ENCODE measurements at regions of chr9 and their contacts with region 1.

Region 1: DNA sequence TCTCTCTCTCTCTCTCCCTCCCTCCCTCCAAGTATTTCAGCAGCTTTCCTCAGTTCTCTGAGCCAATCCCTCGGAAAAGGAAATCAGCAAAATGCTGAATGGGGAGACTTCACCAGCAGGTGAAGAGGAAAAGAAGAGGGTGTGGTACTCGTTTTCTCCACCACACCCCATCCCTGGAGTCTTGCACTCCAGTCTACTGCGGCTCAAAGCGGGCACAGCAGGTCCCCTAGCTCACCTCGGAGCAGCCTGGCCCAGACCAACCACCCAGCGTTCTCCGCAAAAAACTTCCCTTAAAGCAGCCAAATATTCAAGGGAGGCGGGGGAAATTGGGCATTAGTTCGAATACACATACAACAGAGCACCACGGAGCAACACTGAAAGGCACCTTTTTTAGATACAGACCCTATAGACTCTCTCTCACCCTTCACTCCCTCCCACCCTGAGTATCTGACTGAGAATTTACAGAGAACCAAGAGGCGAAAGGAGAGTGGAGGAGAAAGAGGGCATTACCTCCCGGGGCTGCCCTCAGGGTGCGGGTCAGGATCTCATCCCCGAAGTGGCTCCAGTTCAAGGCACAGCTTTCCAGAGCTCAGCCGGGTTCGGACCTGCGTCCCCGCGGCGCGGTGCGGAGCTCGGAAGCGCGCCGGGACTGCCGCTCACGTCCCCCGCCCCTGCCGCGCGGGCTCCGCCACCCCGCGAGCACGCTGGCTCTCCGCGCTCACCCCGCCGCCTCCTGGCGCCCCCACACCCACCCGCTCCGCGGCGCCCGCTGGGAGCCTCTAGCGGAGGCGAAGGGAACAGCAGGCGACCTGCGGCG is 1638.5 kb upstream of the C9orf72 start:
- DNase-seq: peak in 2 of 5 donors; percentile 37 to 56
- H3K4me3 ChIP-seq: peak overlapping the region; percentile 49
- H3K27ac ChIP-seq: no peak overlapping the region
- H3K4me1 ChIP-seq: peaks cover 2% of the 10 kb centered on the region
- H3K27me3 ChIP-seq: no peaks in the 10 kb centered on the region
- CTCF ChIP-seq: peak in 1 of 3 donors; percentile 39
- EP300 ChIP-seq: no peak
- POLR2A ChIP-seq: no peak

Region 2: GRCh38 chr9:27586304-27586703 is 1625.5 kb before region 1 on chr9:
- intact Hi-C with region 1: loop called in 1 of 4 experiments (anchors 10 kb)
- DNase-seq: no peak
- H3K4me3 ChIP-seq: no peak overlapping the region
- H3K27ac ChIP-seq: no peak overlapping the region
- H3K4me1 ChIP-seq: no peaks in the 10 kb centered on the region
- H3K27me3 ChIP-seq: no peaks in the 10 kb centered on the region
- CTCF ChIP-seq: no peak
- EP300 ChIP-seq: no peak
- POLR2A ChIP-seq: no peak

Region 3: GRCh38 chr9:29044958-29045357 is 166.8 kb before region 1 on chr9:
- intact Hi-C with region 1: no loop called
- DNase-seq: no peak
- H3K4me3 ChIP-seq: no peak overlapping the region
- H3K27ac ChIP-seq: no peak overlapping the region
- H3K4me1 ChIP-seq: no peaks in the 10 kb centered on the region
- H3K27me3 ChIP-seq: no peaks in the 10 kb centered on the region
- CTCF ChIP-seq: no peak
- EP300 ChIP-seq: no peak
- POLR2A ChIP-seq: no peak

Region 4: DNA sequence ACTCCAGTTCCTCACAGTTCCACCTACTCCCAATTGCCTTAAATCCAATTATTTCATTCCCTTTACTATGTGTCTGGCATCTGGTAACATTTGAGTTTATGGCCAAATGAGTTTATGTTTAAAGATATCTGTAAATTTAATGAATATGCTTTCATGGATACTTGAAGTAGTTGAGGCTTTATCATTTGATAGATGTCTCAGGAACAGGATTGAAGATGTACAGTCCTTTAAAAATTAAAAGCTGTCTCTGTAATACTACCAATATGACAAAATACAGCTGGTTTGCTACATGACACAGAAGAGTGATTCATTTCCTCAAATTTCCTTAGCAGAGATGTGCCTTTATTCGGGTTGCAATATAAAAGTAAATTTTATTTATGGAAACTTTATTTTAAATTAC is 846.7 kb after region 1 on chr9:
- intact Hi-C with region 1: no loop called
- DNase-seq: no peak
- H3K4me3 ChIP-seq: no peak overlapping the region
- H3K27ac ChIP-seq: no peak overlapping the region
- H3K4me1 ChIP-seq: no peaks in the 10 kb centered on the region
- H3K27me3 ChIP-seq: no peaks in the 10 kb centered on the region
- CTCF ChIP-seq: no peak
- EP300 ChIP-seq: no peak
- POLR2A ChIP-seq: no peak

Region 5: DNA sequence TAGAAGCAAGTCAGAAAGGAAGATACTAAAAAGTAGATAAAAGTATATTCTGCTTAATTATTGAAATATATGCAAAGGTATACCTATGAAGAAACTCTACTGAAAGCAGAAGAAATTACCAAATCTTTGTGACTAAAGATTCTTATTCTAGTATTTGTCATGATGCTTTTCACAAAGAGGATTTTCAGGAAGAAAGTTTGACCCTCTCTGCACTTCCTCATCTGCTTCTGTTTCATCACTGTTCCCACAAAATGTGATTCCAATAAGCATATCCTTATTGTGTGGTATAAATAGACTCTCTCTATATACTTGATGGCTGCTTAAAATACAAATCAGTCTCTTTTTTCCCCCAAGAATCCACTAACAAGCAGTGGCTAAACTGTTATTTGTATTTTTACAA is 1033.1 kb after region 1 on chr9:
- intact Hi-C with region 1: no loop called
- DNase-seq: no peak
- H3K4me3 ChIP-seq: no peak overlapping the region
- H3K27ac ChIP-seq: no peak overlapping the region
- H3K4me1 ChIP-seq: no peaks in the 10 kb centered on the region
- H3K27me3 ChIP-seq: no peaks in the 10 kb centered on the region
- CTCF ChIP-seq: no peak
- EP300 ChIP-seq: no peak
- POLR2A ChIP-seq: no peak